ENCODE measurements at regions of chr7 and their contacts with region 1.

Region 1: GRCh38 chr7:23712368-23713284 is 2.6 kb downstream of the STK31 start:
- DNase-seq: no peak
- H3K4me3 Mint-ChIP-seq: no peak overlapping the region
- H3K27ac Mint-ChIP-seq: peak overlapping the region; percentile 5
- H3K4me1 Mint-ChIP-seq: no peaks in the 10 kb centered on the region
- H3K27me3 Mint-ChIP-seq: peaks cover 2% of the 10 kb centered on the region

Region 2: GRCh38 chr7:23570592-23571200 is 141.9 kb before region 1 on chr7:
- CTCF ChIA-PET with region 1: interaction called, 135 read pairs
- POLR2A ChIA-PET with region 1: no interaction called
- intact Hi-C with region 1: loop called (anchors 1 kb)
- DNase-seq: peak; percentile 82
- H3K4me3 Mint-ChIP-seq: no peak overlapping the region
- H3K27ac Mint-ChIP-seq: no peak overlapping the region
- H3K4me1 Mint-ChIP-seq: no peaks in the 10 kb centered on the region
- H3K27me3 Mint-ChIP-seq: peaks cover 8% of the 10 kb centered on the region

Measured in activated CD4-positive, alpha-beta memory T cell treated with anti-CD3 and anti-CD28 coated beads for 36 hours (primary cell).